A673 (cell line): ENCODE measurements at regions of chr22 and their contacts with region 1.

Region 1: GRCh38 chr22:37457093-37457893 is 28.9 kb downstream of the MFNG start:
- DNase-seq: peak; percentile 54
- H3K4me3 ChIP-seq: no peak overlapping the region
- H3K27ac ChIP-seq: no peak overlapping the region
- H3K4me1 ChIP-seq: peaks cover 4% of the 10 kb centered on the region
- H3K27me3 ChIP-seq: no peaks in the 10 kb centered on the region
- CTCF ChIP-seq: peak; percentile 93

Region 2: GRCh38 chr22:37316875-37317371 is 140.4 kb before region 1 on chr22:
- CTCF ChIA-PET with region 1: interaction called, 15 read pairs
- POLR2A ChIA-PET with region 1: no interaction called
- intact Hi-C with region 1: loop called (anchors 2 kb)
- DNase-seq: peak; percentile 74
- H3K4me3 ChIP-seq: no peak overlapping the region
- H3K27ac ChIP-seq: no peak overlapping the region
- H3K4me1 ChIP-seq: no peaks in the 10 kb centered on the region
- H3K27me3 ChIP-seq: no peaks in the 10 kb centered on the region
- CTCF ChIP-seq: peak; percentile 87